Ovary (tissue), 10 donors: ENCODE measurements at regions of chr18 and their contacts with region 1.

Region 1: GRCh38 chr18:71598374-71598773 is 945.8 kb downstream of the CBLN2 start:
- DNase-seq: no peak
- H3K4me3 ChIP-seq: no peak overlapping the region
- H3K27ac ChIP-seq: no peak overlapping the region
- H3K4me1 ChIP-seq: no peaks in the 10 kb centered on the region
- H3K27me3 ChIP-seq: no peaks in the 10 kb centered on the region
- CTCF ChIP-seq: no peak
- EP300 ChIP-seq: no peak
- POLR2A ChIP-seq: no peak

Region 2: DNA sequence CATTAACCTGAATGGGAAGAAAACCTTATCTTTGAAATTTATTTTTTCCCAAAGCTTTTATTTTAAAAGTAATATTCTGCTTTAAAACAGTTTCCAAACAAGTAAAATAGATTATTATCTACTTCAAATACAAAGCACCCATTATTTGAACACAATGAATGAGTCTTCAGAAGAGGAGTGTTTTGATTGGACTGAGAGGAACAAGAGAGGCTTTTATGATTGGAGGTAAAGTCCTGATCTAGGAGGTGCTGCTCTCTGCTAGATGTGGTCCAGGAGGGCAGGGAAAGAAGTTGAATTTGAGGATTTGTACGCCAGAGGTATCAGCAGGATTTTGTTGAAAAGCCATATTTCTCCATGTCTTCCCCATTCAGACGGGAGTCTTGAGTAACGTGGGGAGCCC is 408.8 kb before region 1 on chr18:
- intact Hi-C with region 1: no loop called
- DNase-seq: no peak
- H3K4me3 ChIP-seq: no peak overlapping the region
- H3K27ac ChIP-seq: no peak overlapping the region
- H3K4me1 ChIP-seq: no peaks in the 10 kb centered on the region
- H3K27me3 ChIP-seq: no peaks in the 10 kb centered on the region
- CTCF ChIP-seq: no peak
- EP300 ChIP-seq: no peak
- POLR2A ChIP-seq: no peak

Region 3: GRCh38 chr18:71398531-71398930 is 199.8 kb before region 1 on chr18:
- intact Hi-C with region 1: loop called in 1 of 4 experiments (anchors 10 kb)
- DNase-seq: no peak
- H3K4me3 ChIP-seq: no peak overlapping the region
- H3K27ac ChIP-seq: no peak overlapping the region
- H3K4me1 ChIP-seq: no peaks in the 10 kb centered on the region
- H3K27me3 ChIP-seq: no peaks in the 10 kb centered on the region
- CTCF ChIP-seq: no peak
- EP300 ChIP-seq: no peak
- POLR2A ChIP-seq: no peak